Endothelial cell of umbilical vein (primary cell): ENCODE measurements at regions of chr3 and their contacts with region 1.

Region 1: DNA sequence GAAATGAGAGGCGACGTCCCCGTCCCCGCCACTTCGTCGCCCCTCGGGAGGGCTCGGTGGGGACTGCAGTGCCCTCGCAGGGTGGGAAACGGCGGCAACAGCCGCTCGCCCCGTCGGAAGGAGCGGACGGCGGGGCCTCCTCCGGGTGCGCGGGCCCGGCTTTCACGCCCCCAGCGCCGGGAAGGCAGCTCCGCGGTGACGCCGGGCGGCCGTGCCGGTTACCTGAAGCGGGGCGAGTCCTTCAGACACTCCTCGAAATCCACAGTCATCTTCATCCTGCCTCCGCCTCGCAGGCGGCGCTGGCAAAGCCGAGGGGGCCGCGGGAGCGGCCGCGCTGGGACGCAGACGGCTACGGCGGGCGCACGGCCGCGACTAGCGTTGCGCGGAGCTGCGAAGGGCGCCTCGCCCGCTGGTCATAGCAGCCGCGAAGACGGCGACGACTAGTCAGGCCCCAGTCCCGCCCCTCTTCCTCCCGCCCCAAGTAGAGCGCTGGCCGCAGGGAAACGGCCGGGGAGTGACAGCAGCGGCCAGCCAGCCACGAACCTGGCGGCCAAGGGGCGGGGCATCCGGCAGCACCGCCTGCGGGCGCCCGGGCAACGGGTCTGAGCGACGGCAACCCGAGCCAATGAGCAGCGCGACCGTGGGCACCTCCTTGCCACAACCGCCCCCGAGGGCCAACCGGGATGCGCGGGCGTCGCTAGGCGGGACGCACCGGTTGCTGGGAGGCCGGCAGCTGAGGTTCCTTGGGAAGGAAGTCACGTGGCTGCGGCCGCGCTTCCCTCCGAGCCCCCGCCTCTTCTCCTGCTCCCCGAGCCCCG is at the start of gene ACAP2:
- DNase-seq: peak; percentile 100
- H3K4me3 ChIP-seq: peak within 1 kb of the TSS; percentile 70 to 88 (median 81)
- H3K27ac ChIP-seq: peak within 1 kb of the TSS; percentile 63
- H3K4me1 ChIP-seq: peaks cover 15% of the 10 kb centered on the region
- H3K27me3 ChIP-seq: no peaks in the 10 kb centered on the region
- CTCF ChIP-seq: no peak
- POLR2A ChIP-seq: peak; percentile 93
- total RNA-seq, gene ACAP2: 34.4 and 36.9 TPM in 2 replicates

Region 2: DNA sequence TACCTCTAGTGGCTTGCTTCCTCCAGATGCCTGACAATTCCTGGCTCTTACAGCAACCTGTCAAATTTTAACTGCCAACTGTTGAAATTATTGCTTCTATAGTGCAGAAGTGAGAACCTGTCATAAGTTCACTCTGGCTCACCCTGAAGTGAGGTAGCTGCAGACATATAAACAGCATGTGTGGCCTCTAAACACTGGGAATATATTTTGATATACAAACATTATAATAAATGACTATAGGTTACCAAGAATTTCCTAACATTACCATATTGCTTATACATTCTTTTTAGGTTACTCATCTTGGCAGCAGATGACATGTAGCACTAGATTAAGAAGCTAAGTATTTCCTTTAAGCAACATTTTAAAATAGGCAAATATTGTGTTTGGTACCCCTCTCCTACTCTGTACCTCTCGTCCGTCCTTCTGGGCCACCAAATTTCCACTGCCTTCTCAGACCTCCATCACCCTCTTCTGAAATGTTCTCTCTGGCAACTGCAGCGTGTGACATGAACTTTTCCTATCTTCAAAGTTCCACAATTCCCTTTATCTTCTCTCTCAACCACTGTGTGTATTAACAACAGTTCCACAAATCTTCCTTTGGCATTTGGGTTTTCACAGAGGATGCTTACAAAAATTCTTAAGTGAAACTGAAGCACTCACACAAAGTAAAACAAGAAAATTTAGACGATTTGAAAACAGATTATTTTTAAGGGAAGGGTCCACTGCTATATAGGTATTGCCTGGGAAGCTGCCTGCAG is 156.5 kb before region 1 on chr3:
- CTCF ChIA-PET with region 1: no interaction called
- POLR2A ChIA-PET with region 1: interaction called, 3 read pairs
- dilution Hi-C with region 1: no loop called
- intact Hi-C with region 1: loop called (anchors 5 kb)
- DNase-seq: peak; percentile 53
- H3K4me3 ChIP-seq: no peak overlapping the region
- H3K27ac ChIP-seq: peak overlapping the region; percentile 35
- H3K4me1 ChIP-seq: peaks cover 15% of the 10 kb centered on the region
- H3K27me3 ChIP-seq: no peaks in the 10 kb centered on the region
- CTCF ChIP-seq: no peak
- POLR2A ChIP-seq: no peak

Region 3: DNA sequence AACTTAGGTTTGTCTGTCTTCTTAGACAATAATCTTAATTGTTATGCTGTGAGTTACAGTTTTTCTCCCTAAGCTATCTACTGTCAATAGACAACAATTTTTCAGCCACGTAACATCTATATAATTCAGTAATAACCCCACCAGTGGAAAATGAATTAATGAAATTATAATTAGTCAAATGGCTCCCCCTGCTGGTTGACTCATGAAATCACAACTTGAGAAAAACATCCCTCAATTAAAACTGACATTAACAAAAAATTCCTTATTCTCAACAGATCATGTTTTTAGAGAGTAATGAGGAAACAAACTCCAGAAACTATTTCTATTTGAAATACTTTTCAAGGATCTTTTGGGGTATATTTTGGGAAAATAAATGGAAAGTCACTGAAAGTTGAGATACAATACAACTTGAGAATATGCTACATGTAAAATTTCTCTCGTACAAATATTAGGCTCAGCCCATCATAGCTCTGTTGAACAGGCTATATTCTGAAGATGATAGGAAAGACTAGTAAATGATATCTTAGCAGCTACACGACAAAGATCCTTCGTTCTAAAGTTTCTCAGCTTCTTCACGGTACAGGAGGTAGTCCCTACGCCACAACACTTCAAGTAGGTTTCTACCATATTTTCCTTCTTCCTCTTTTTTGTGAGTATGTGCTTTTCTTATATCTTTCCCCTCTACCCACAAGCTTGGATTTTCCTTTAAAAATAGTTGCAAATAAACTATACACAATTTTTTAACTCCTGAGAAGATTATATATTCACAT is 79.7 kb after region 1 on chr3:
- CTCF ChIA-PET with region 1: no interaction called
- POLR2A ChIA-PET with region 1: no interaction called
- dilution Hi-C with region 1: no loop called
- intact Hi-C with region 1: loop called (anchors 10 kb)
- DNase-seq: peak; percentile 38
- H3K4me3 ChIP-seq: no peak overlapping the region
- H3K27ac ChIP-seq: no peak overlapping the region
- H3K4me1 ChIP-seq: no peaks in the 10 kb centered on the region
- H3K27me3 ChIP-seq: no peaks in the 10 kb centered on the region
- CTCF ChIP-seq: peak; percentile 22 to 34
- POLR2A ChIP-seq: no peak

Region 4: DNA sequence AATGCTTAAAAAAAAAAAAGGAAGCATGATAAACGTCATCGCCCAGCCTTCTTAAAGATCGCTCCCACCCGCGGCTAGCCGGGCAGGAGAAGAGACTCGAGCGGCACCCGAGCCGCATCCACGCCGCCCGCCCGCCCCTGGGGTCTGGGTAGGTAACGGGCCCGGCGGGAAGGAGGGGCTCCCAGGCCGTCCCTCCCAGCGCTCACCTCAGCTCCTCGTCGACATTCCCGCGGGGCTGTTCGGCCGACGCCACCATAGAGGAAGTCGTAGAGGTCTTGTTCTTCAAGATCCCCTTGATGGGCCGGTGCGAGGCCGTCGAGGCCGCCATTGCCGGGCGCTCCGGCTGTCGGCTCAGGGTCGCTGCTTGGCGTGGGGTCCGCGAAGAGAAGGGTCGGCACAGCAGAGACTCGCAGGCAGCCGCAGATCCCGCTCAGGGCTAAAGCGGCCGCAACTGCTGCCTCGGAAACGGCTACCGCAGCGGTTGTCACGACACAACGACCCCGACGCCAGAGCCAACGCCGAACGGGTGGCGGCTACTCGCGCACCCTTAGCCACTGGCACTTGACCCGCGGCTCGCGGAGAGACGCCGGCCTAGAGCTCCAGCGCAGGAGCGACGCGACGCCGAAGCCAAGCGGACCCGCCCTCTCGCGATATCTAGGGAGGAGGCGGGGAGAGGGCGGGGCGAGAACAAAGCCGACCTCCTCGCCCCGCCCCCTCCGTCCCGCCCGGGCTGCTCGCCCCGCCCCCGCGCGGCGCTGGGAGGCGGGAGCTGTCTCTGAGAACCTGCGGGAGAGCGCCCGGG is 100.1 kb after region 1 on chr3 and contains the start of gene PPP1R2:
- CTCF ChIA-PET with region 1: no interaction called
- POLR2A ChIA-PET with region 1: interaction called, 7 read pairs
- dilution Hi-C with region 1: no loop called
- intact Hi-C with region 1: loop called (anchors 2 kb)
- DNase-seq: peak; percentile 92
- H3K4me3 ChIP-seq: peak within 1 kb of the TSS; percentile 30 to 97 (median 93)
- H3K27ac ChIP-seq: peak within 1 kb of the TSS; percentile 61
- H3K4me1 ChIP-seq: peaks cover 33% of the 10 kb centered on the region
- H3K27me3 ChIP-seq: peaks cover 2% of the 10 kb centered on the region in 2 experiments
- CTCF ChIP-seq: no peak
- POLR2A ChIP-seq: peak; percentile 95
- total RNA-seq, gene PPP1R2: 36.2 and 37.3 TPM in 2 replicates